ENCODE measurements at regions of chr2 and their contacts with region 1.

Region 1: GRCh38 chr2:233404222-233404621 is 49.9 kb downstream of the DGKD start:
- DNase-seq: peak; percentile 79
- H3K4me3 Mint-ChIP-seq: no peak overlapping the region
- H3K27ac Mint-ChIP-seq: peak overlapping the region; percentile 13
- H3K4me1 Mint-ChIP-seq: peaks cover 34% of the 10 kb centered on the region
- H3K27me3 Mint-ChIP-seq: no peaks in the 10 kb centered on the region

Region 2: GRCh38 chr2:232389327-232389726 is 1014.9 kb before region 1 on chr2:
- CTCF ChIA-PET with region 1: no interaction called
- POLR2A ChIA-PET with region 1: no interaction called
- intact Hi-C with region 1: no loop called
- DNase-seq: no peak
- H3K4me3 Mint-ChIP-seq: no peak overlapping the region
- H3K27ac Mint-ChIP-seq: no peak overlapping the region
- H3K4me1 Mint-ChIP-seq: no peaks in the 10 kb centered on the region
- H3K27me3 Mint-ChIP-seq: peaks cover 47% of the 10 kb centered on the region

Region 3: GRCh38 chr2:233418761-233419625 is 14.8 kb after region 1 on chr2:
- CTCF ChIA-PET with region 1: interaction called, 27 read pairs
- POLR2A ChIA-PET with region 1: interaction called, 5 read pairs
- intact Hi-C with region 1: no loop called
- DNase-seq: peak; percentile 72
- H3K4me3 Mint-ChIP-seq: peak overlapping the region; percentile 63
- H3K27ac Mint-ChIP-seq: peak overlapping the region; percentile 85
- H3K4me1 Mint-ChIP-seq: peaks cover 92% of the 10 kb centered on the region
- H3K27me3 Mint-ChIP-seq: no peaks in the 10 kb centered on the region

Region 4: GRCh38 chr2:233426619-233427342 is 22.6 kb after region 1 on chr2:
- CTCF ChIA-PET with region 1: interaction called, 24 read pairs
- POLR2A ChIA-PET with region 1: no interaction called
- intact Hi-C with region 1: loop called (anchors 2 kb)
- DNase-seq: peak; percentile 90
- H3K4me3 Mint-ChIP-seq: no peak overlapping the region
- H3K27ac Mint-ChIP-seq: peak overlapping the region; percentile 68
- H3K4me1 Mint-ChIP-seq: peaks cover 81% of the 10 kb centered on the region
- H3K27me3 Mint-ChIP-seq: no peaks in the 10 kb centered on the region

Region 5: DNA sequence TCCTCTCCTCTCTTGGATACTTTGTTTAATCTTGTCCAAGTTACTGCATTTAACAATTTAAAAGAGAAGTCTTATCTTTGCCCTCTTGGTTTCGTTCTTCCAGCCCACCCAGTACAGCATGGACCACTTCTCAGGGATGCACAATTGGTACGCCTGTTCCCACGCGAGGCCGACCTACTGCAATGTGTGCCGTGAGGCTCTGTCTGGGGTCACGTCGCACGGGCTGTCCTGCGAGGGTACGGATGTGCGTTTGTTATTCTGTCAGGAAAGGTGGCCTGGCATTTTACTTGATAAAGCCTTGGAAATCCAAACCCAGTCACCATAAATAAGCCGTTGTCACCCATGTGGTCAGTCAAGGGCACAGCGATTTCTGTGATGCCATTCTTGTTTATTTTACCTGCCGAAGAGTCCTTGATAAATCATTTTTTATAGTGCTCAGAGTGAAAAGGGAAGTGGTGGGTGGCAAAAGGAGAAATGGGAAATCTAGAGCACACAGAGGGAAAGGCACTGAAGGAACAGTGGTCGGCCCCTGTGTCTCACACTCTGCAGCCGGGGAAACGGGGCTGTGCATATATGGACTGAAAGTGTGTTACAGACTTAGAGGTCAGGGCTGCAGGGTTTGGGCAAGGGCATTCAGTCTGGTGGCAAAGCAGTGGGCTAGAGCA is 30.6 kb after region 1 on chr2:
- CTCF ChIA-PET with region 1: interaction called, 287 read pairs
- POLR2A ChIA-PET with region 1: no interaction called
- intact Hi-C with region 1: no loop called
- DNase-seq: no peak
- H3K4me3 Mint-ChIP-seq: no peak overlapping the region
- H3K27ac Mint-ChIP-seq: no peak overlapping the region
- H3K4me1 Mint-ChIP-seq: peaks cover 10% of the 10 kb centered on the region
- H3K27me3 Mint-ChIP-seq: no peaks in the 10 kb centered on the region

Region 6: GRCh38 chr2:233443468-233444183 is 39.4 kb after region 1 on chr2:
- CTCF ChIA-PET with region 1: interaction called, 287 read pairs
- POLR2A ChIA-PET with region 1: interaction called, 7 read pairs
- intact Hi-C with region 1: loop called (anchors 1 kb)
- DNase-seq: peak; percentile 88
- H3K4me3 Mint-ChIP-seq: no peak overlapping the region
- H3K27ac Mint-ChIP-seq: no peak overlapping the region
- H3K4me1 Mint-ChIP-seq: peaks cover 9% of the 10 kb centered on the region
- H3K27me3 Mint-ChIP-seq: no peaks in the 10 kb centered on the region

Region 7: DNA sequence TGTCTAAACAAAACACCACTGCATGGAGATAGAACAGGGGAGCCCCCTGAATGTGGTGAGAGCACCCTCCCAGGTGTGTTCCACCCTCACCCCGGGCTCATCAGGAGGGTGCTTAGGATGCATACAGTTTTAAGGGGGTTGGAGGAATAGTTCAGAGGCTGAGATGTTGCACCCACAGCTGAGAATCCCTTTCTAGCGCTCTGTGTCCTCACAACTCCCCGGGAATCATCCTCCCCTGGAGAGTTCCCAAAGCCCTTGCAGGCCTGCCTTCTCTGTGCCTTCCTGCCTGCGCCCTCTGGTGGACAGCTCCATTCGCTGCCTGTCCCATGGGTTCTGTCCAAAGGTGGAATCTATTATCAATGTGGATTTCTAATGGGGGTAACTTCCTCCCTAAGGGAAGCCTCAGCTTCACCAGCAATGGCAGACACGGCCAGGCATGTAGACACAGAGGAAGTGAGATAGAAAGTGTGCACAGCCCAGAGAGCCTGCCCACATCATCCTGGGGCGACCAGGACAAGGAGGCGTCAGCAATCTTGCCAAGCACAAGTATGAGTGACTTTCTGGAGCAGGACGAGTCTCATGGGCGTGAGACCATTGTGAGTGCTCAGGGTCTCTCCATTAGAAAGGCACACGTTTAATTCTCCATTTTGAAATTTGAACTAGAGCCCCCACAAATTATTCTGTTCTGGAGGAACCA is 307.2 kb after region 1 on chr2:
- CTCF ChIA-PET with region 1: no interaction called
- POLR2A ChIA-PET with region 1: no interaction called
- intact Hi-C with region 1: loop called (anchors 10 kb)
- DNase-seq: peak; percentile 75
- H3K4me3 Mint-ChIP-seq: no peak overlapping the region
- H3K27ac Mint-ChIP-seq: no peak overlapping the region
- H3K4me1 Mint-ChIP-seq: no peaks in the 10 kb centered on the region
- H3K27me3 Mint-ChIP-seq: peaks cover 29% of the 10 kb centered on the region